ENCODE measurements at regions of chr1 and their contacts with region 1.

Region 1: DNA sequence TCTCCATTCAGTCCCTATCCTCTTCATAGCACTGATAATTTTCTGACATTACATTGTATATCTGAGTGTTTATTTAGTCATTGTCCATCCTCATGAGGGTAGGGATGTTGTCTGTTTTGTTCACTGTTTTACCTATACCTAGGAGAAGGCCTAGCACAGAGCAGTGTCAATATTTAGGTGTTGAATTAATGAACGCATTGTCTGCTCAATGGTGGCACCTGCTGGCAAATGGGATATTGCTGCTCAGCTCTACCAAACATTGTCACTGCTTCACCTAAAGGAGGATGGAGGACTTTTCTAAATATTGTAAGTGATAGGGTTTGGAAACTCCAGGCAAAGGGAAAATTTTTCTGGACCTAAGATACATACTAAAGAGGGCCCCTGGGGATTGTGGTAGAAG is 243.9 kb downstream of the RRAGC start:
- DNase-seq: no peak
- ATAC-seq: no peak
- H3K4me3 ChIP-seq: no peak overlapping the region
- H3K27ac ChIP-seq: peak overlapping the region in 1 of 10 donors; percentile 1
- H3K4me1 ChIP-seq: peaks cover 0 to 19% (median 4%) of the 10 kb centered on the region in 9 donors
- H3K27me3 ChIP-seq: peaks cover 0 to 40% (median 13%) of the 10 kb centered on the region in 7 donors
- CTCF ChIP-seq: peak in 1 of 9 donors; percentile 14

Region 2: DNA sequence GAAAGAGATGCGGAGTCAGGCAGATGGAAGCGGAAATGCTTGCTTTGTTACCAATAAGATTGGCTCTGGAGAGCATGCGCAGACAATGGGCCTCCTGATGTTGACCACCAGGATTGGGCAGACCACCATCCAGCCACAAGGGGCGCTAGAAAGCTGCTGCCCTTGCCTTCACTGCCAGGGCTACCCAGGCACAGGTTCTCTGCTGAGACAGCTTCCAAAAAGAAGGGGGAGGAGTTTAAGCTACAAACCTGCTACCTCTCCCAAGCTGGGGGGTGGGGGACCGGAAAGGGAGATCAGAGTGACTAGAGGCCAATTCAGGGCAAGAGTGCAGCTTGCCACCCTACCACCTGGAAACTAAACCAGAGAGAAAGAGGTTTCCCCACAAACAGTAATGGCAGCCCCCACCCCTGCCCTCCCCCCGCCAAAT is 125.8 kb before region 1 on chr1:
- intact Hi-C with region 1: no loop called
- DNase-seq: no peak
- ATAC-seq: no peak
- H3K4me3 ChIP-seq: no peak overlapping the region
- H3K27ac ChIP-seq: no peak overlapping the region
- H3K4me1 ChIP-seq: no peaks in the 10 kb centered on the region
- H3K27me3 ChIP-seq: peaks cover 0 to 51% (median 28%) of the 10 kb centered on the region in 7 donors
- CTCF ChIP-seq: peak in 7 of 9 donors; percentile 31 to 59 (median 40)

Region 3: GRCh38 chr1:38727684-38728584 is 112.3 kb after region 1 on chr1:
- intact Hi-C with region 1: loop called in 1 of 10 experiments (anchors 10 kb)
- DNase-seq: peak; percentile 55 to 64
- ATAC-seq: peak; percentile 83 to 93 (median 86)
- H3K4me3 ChIP-seq: peak overlapping the region in 2 of 10 donors; percentile 3 to 23
- H3K27ac ChIP-seq: peak overlapping the region in 3 of 10 donors; percentile 15 to 33 (median 26)
- H3K4me1 ChIP-seq: peaks cover 2 to 25% (median 15%) of the 10 kb centered on the region in 9 donors
- H3K27me3 ChIP-seq: peaks cover 0 to 69% (median 17%) of the 10 kb centered on the region in 7 donors
- CTCF ChIP-seq: no peak

Measured in heart right ventricle (tissue), 16 donors.